PC-9 (cell line): ENCODE measurements at regions of chr20 and their contacts with region 1.

Region 1: GRCh38 chr20:31637660-31638059 is at the start of gene COX4I2:
- DNase-seq: no peak
- H3K4me3 ChIP-seq: no peak within 1 kb of the TSS
- H3K27ac ChIP-seq: no peak within 1 kb of the TSS
- H3K4me1 ChIP-seq: no peaks in the 10 kb centered on the region
- H3K27me3 ChIP-seq: no peaks in the 10 kb centered on the region
- CTCF ChIP-seq: no peak
- total RNA-seq, gene COX4I2: not detected in 2 replicates

Region 2: GRCh38 chr20:31308535-31309162 is 329.0 kb before region 1 on chr20 and contains the start of gene DEFB116:
- CTCF ChIA-PET with region 1: no interaction called
- POLR2A ChIA-PET with region 1: no interaction called
- intact Hi-C with region 1: no loop called
- DNase-seq: no peak
- H3K4me3 ChIP-seq: no peak within 1 kb of the TSS
- H3K27ac ChIP-seq: no peak within 1 kb of the TSS
- H3K4me1 ChIP-seq: no peaks in the 10 kb centered on the region
- H3K27me3 ChIP-seq: no peaks in the 10 kb centered on the region
- CTCF ChIP-seq: no peak
- total RNA-seq, gene DEFB116: not detected in 2 replicates

Region 3: GRCh38 chr20:31508517-31509244 is 129.0 kb before region 1 on chr20:
- CTCF ChIA-PET with region 1: no interaction called
- POLR2A ChIA-PET with region 1: interaction called, 12 read pairs
- intact Hi-C with region 1: no loop called
- DNase-seq: no peak
- H3K4me3 ChIP-seq: no peak overlapping the region
- H3K27ac ChIP-seq: no peak overlapping the region
- H3K4me1 ChIP-seq: peaks cover 12% of the 10 kb centered on the region
- H3K27me3 ChIP-seq: no peaks in the 10 kb centered on the region
- CTCF ChIP-seq: no peak

Region 4: GRCh38 chr20:31704225-31705119 is 66.8 kb after region 1 on chr20:
- CTCF ChIA-PET with region 1: interaction called, 10 read pairs
- POLR2A ChIA-PET with region 1: interaction called, 43 read pairs
- intact Hi-C with region 1: no loop called
- DNase-seq: peak; percentile 92 to 98
- H3K4me3 ChIP-seq: peak overlapping the region; percentile 29; the same call in 1 of the 2 replicates
- H3K27ac ChIP-seq: peak overlapping the region; percentile 95
- H3K4me1 ChIP-seq: peaks cover 90% of the 10 kb centered on the region
- H3K27me3 ChIP-seq: no peaks in the 10 kb centered on the region
- CTCF ChIP-seq: no peak

Region 5: GRCh38 chr20:32138921-32139320 is 501.3 kb after region 1 on chr20:
- CTCF ChIA-PET with region 1: interaction called, 12 read pairs
- POLR2A ChIA-PET with region 1: no interaction called
- intact Hi-C with region 1: no loop called
- DNase-seq: no peak
- H3K4me3 ChIP-seq: no peak overlapping the region
- H3K27ac ChIP-seq: no peak overlapping the region
- H3K4me1 ChIP-seq: no peaks in the 10 kb centered on the region
- H3K27me3 ChIP-seq: no peaks in the 10 kb centered on the region
- CTCF ChIP-seq: no peak